Activated B cell treated with CpG ODN at 0.5 μM for 24 hours (primary cell): ENCODE measurements at regions of chr2 and their contacts with region 1.

Region 1: GRCh38 chr2:180924063-180924462 is 56.3 kb upstream of the UBE2E3 start:
- DNase-seq: no peak
- ATAC-seq: no peak
- H3K4me3 Mint-ChIP-seq: no peak overlapping the region
- H3K27ac Mint-ChIP-seq: no peak overlapping the region
- H3K4me1 Mint-ChIP-seq: no peaks in the 10 kb centered on the region
- H3K27me3 Mint-ChIP-seq: peaks cover 5% of the 10 kb centered on the region
- CTCF ChIP-seq: no peak

Region 2: GRCh38 chr2:180614776-180615175 is 309.3 kb before region 1 on chr2:
- CTCF ChIA-PET with region 1: no interaction called
- POLR2A ChIA-PET with region 1: no interaction called
- intact Hi-C with region 1: loop called (anchors 5 kb)
- DNase-seq: no peak
- ATAC-seq: no peak
- H3K4me3 Mint-ChIP-seq: no peak overlapping the region
- H3K27ac Mint-ChIP-seq: no peak overlapping the region
- H3K4me1 Mint-ChIP-seq: no peaks in the 10 kb centered on the region
- H3K27me3 Mint-ChIP-seq: no peaks in the 10 kb centered on the region
- CTCF ChIP-seq: no peak